K562 (cell line): ENCODE measurements at regions of chr2 and their contacts with region 1.

Region 1: DNA sequence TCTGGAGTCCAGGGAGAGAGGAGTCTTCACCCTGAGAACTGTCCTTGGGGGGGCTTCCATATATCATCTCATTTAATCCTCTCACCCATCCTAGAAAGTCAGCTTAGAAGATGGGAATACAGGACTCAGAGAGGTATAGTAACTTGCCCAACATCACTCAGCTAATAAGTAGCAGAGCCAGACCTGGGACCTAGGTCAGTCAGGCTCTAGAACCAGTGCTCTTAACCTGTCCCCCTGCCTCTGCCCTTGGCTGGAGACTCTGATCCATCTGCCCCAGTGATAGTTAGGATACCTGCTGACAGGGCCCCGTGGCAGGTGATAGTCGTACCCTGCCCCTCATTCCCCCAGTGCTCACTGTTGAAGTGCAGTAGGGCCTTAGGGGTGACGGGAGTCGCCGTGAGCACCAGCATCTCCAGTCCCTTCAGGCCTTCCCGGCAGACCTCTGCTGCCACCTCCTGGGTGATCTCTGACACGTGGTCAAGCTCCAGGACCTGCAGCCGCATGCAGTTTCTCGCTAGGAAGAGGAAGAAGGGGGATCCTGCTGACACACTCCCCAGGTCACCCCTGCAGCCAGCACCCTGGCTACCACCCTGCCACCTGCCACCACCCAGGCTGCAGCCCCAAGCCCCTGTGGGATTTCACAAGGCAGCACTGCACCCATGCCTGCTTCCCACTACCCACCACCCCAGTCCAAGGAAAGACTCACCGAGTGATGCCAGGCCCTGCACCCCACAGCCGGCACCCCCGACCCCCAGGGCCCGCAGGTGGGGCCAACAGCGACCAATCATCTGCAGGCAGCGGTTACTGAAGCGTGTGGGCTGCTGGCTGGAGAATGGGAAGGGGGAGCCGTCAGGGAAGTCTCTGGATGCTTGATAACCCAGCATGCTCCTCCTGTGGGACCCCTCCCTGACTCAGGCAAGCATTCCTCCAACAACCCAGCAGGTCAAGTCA is 24.0 kb downstream of the FBXO41 start:
- DNase-seq: peak; percentile 80 to 84 (median 80)
- ATAC-seq: peak; percentile 94
- H3K4me3 ChIP-seq: no peak overlapping the region
- H3K27ac ChIP-seq: no peak overlapping the region
- H3K4me1 ChIP-seq: peaks cover 2 to 13% of the 10 kb centered on the region in 2 experiments; a peak in 2 of 5 replicates
- H3K27me3 ChIP-seq: no peaks in the 10 kb centered on the region
- CTCF ChIP-seq: peak; percentile 80 to 84 (median 80)
- EP300 ChIP-seq: no peak
- POLR2A ChIP-seq: no peak
- RAD21 ChIP-seq: peak; percentile 58 to 77

Region 2: DNA sequence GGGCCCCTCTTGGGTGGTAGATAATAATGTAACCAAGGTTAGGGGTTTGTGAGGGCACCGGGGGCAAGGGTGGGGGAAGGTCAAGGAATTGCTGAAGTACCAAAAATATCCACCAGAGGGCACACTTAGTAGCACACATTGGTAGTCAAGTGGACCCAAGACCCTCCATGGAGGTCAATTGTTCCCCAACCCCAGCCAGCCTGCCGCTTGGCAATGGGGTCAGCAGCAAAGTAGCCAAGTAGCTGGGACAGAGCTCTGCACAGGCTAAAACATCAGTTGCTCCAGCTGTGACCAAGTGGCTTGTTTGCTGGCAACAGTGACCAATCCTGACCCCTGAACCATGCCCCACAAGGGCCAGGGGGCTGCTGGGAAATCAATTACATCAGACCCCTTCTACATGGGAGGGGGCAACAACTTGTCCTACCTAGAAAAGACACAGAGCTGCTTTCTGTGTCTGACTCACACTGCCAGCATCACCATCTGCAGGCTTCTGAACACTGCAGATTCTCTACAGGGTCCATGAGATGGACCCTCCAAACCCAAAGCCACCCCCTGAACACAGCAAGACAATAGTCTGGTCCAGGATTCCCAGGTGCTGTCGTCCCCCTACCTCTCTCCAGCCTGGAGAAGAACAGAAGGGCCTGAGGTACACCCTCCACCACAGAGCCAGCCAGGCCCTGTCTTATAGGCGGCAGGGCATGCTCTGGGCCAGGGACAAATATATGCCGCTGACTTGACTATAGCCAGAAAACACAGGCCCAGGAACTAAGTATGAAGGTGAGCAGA is 267.0 kb before region 1 on chr2:
- CTCF ChIA-PET with region 1: no interaction called
- POLR2A ChIA-PET with region 1: no interaction called
- in situ Hi-C with region 1: no loop called
- intact Hi-C with region 1: loop called (anchors 10 kb)
- DNase-seq: peak; percentile 70 to 86 (median 79)
- ATAC-seq: peak; percentile 86
- H3K4me3 ChIP-seq: no peak overlapping the region
- H3K27ac ChIP-seq: no peak overlapping the region
- H3K4me1 ChIP-seq: peaks cover 0 to 12% of the 10 kb centered on the region in 2 experiments; a peak in 2 of 5 replicates
- H3K27me3 ChIP-seq: no peaks in the 10 kb centered on the region
- CTCF ChIP-seq: peak; percentile 68 to 79 (median 72)
- EP300 ChIP-seq: no peak
- POLR2A ChIP-seq: no peak
- RAD21 ChIP-seq: peak; percentile 52 to 68

Region 3: DNA sequence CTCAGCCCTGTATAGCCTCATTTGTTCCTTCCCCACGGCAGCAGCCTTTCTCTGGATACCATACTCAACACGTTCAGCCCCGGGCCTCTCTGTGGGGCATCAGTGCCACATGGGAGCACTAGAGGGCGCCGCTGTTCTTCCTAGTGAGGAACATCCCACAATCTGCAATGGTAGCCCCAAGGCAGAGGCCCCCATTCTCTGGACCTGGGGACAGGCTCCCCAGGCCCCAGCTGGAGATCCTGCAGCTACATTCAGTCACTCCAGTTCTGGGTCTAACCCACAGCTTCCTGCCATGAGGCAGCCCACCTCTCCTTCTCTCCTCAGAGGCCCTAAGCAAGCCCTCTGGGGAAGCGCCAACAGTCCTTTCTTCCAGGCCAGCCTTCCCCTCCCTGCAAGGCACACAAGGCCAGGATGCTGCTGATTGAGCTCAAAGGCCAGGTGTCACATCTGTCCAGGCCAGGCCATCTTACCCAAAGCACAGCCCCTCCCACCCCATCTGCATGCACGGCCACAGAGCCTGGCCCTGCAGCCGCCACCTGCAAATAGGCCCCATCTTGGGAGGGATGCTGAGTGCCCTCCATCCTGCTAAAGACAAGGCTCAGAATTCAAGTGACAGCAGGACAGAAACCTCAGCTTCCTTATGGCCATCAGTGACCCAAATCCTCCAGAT is 174.5 kb before region 1 on chr2:
- CTCF ChIA-PET with region 1: interaction called, 7 read pairs
- POLR2A ChIA-PET with region 1: no interaction called
- in situ Hi-C with region 1: no loop called
- intact Hi-C with region 1: loop called (anchors 5 kb)
- DNase-seq: peak; percentile 78 to 83 (median 80)
- ATAC-seq: peak; percentile 96
- H3K4me3 ChIP-seq: no peak overlapping the region
- H3K27ac ChIP-seq: no peak overlapping the region
- H3K4me1 ChIP-seq: peaks cover 0 to 12% of the 10 kb centered on the region in 2 experiments; a peak in 4 of 5 replicates
- H3K27me3 ChIP-seq: no peaks in the 10 kb centered on the region
- CTCF ChIP-seq: peak; percentile 91 to 94 (median 93)
- EP300 ChIP-seq: no peak
- POLR2A ChIP-seq: no peak
- RAD21 ChIP-seq: peak; percentile 95

Region 4: DNA sequence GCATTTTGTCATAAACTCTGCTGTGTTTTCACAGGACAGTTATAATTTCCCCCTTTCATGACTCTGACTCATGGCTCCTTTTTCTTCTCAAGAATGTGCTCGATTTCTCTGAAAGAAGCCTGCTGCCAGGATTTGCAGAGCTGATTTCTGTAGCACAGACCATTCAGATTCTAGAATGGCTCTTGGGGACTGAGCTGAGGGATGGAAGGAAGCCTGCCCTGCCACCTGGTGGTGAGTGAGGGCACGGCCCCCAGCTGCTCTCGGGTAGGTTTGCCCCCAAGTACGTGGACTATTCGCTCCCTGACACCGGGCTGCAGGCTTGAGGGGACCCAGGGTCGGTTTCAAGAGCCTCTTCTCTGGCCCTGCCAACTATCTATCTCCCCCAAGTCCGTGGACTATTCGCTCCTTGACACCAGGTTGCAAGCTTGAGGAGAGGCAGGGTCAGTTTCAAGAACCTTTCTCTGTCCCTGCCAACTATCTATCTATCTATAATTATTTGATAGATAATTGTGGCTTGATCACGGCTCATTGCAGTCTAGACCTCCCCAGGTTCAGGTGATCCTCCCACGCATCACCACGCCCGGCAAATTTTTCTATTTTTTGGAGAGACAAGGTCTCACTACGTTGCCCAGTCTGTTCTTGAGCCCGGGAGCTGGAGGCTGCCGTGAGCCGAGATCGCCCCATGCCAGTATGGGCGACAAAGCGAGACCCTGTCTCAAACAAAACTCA is 47.7 kb before region 1 on chr2:
- CTCF ChIA-PET with region 1: no interaction called
- POLR2A ChIA-PET with region 1: interaction called, 8 read pairs
- in situ Hi-C with region 1: no loop called
- intact Hi-C with region 1: loop called (anchors 2 kb)
- DNase-seq: peak; percentile 76 to 84 (median 80)
- ATAC-seq: peak; percentile 84
- H3K4me3 ChIP-seq: no peak overlapping the region
- H3K27ac ChIP-seq: no peak overlapping the region
- H3K4me1 ChIP-seq: peaks cover 15 to 23% of the 10 kb centered on the region in 2 experiments; a peak in 4 of 5 replicates
- H3K27me3 ChIP-seq: no peaks in the 10 kb centered on the region
- CTCF ChIP-seq: peak; percentile 86 to 96 (median 87)
- EP300 ChIP-seq: no peak
- POLR2A ChIP-seq: no peak
- RAD21 ChIP-seq: peak; percentile 59 to 70

Region 5: GRCh38 chr2:73233154-73233931 is 27.0 kb before region 1 on chr2 and contains the start of gene PRADC1:
- CTCF ChIA-PET with region 1: no interaction called
- POLR2A ChIA-PET with region 1: interaction called, 15 read pairs
- in situ Hi-C with region 1: no loop called
- intact Hi-C with region 1: no loop called
- DNase-seq: peak; percentile 97 to 99 (median 98)
- ATAC-seq: peak; percentile 94
- H3K4me3 ChIP-seq: peak within 1 kb of the TSS; percentile 95
- H3K27ac ChIP-seq: peak within 1 kb of the TSS; percentile 87
- H3K4me1 ChIP-seq: peaks cover 16 to 19% of the 10 kb centered on the region in 2 experiments; a peak in 3 of 5 replicates
- H3K27me3 ChIP-seq: no peaks in the 10 kb centered on the region
- CTCF ChIP-seq: no peak
- EP300 ChIP-seq: no peak
- POLR2A ChIP-seq: peak; percentile 67; the same call in 1 of the 2 replicates
- RAD21 ChIP-seq: no peak
- polyA plus RNA-seq, gene PRADC1: 7.3 to 10.7 TPM